ENCODE measurements at regions of chr4 and their contacts with region 1.

Region 1: GRCh38 chr4:147910315-147910714 is 178.4 kb downstream of the ARHGAP10 start:
- DNase-seq: no peak
- ATAC-seq: no peak
- H3K4me3 ChIP-seq: no peak overlapping the region
- H3K27ac ChIP-seq: no peak overlapping the region
- H3K4me1 ChIP-seq: no peaks in the 10 kb centered on the region
- H3K27me3 ChIP-seq: no peaks in the 10 kb centered on the region
- CTCF ChIP-seq: no peak
- POLR2A ChIP-seq: no peak
- RAD21 ChIP-seq: no peak

Region 2: GRCh38 chr4:147822128-147822527 is 88.2 kb before region 1 on chr4:
- CTCF ChIA-PET with region 1: no interaction called
- POLR2A ChIA-PET with region 1: no interaction called
- RAD21 ChIA-PET with region 1: no interaction called
- intact Hi-C with region 1: no loop called
- DNase-seq: no peak
- ATAC-seq: no peak
- H3K4me3 ChIP-seq: no peak overlapping the region
- H3K27ac ChIP-seq: no peak overlapping the region
- H3K4me1 ChIP-seq: peaks cover 20 to 37% of the 10 kb centered on the region in 2 experiments; a peak in 3 of 4 replicates
- H3K27me3 ChIP-seq: no peaks in the 10 kb centered on the region
- CTCF ChIP-seq: no peak
- POLR2A ChIP-seq: no peak
- RAD21 ChIP-seq: no peak; the same call in 1 of the 2 replicates

Region 3: DNA sequence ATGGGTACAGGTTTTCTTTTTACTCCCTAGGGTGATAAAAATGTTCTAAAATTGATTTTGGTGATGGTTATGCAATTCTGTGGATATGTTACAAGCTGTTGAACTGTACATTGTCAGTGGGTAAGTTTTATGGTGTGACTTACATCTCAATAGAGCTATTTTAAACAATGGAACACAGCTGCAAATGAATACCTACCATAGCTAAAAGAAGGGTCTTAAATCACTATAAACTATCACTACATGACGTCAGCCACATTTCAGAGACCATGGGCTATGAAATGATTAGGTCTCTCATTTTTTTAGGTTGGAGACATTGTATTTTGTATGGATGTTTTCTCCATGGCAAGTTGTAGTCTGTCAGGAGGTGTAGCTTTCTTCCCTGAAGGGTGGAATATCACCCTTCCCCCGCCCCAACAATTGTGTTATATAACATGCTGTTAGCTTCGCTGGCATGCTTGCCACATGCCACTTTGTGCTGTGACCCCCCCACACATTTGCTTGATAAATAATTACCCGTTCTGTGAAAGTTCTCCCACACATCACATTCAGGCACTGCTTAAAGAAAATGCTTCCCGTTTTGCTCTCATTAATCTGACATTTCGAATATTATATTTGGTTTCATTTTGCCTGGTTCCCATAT is 18.7 kb before region 1 on chr4:
- CTCF ChIA-PET with region 1: no interaction called
- POLR2A ChIA-PET with region 1: no interaction called
- RAD21 ChIA-PET with region 1: no interaction called
- intact Hi-C with region 1: loop called (anchors 1 kb)
- DNase-seq: no peak
- ATAC-seq: no peak
- H3K4me3 ChIP-seq: no peak overlapping the region
- H3K27ac ChIP-seq: no peak overlapping the region
- H3K4me1 ChIP-seq: no peaks in the 10 kb centered on the region
- H3K27me3 ChIP-seq: no peaks in the 10 kb centered on the region
- CTCF ChIP-seq: no peak
- POLR2A ChIP-seq: no peak
- RAD21 ChIP-seq: no peak

Measured in HCT116 (cell line).